GM12878 (cell line): ENCODE measurements at regions of chr1 and their contacts with region 1.

Region 1: GRCh38 chr1:199084293-199084692 is 445.5 kb downstream of the PTPRC start:
- DNase-seq: no peak
- ATAC-seq: no peak
- H3K4me3 ChIP-seq: no peak overlapping the region
- H3K27ac ChIP-seq: no peak overlapping the region
- H3K4me1 ChIP-seq: peaks cover 13% of the 10 kb centered on the region
- H3K27me3 ChIP-seq: no peaks in the 10 kb centered on the region
- CTCF ChIP-seq: no peak
- EP300 ChIP-seq: no peak
- POLR2A ChIP-seq: no peak
- RAD21 ChIP-seq: no peak

Region 2: DNA sequence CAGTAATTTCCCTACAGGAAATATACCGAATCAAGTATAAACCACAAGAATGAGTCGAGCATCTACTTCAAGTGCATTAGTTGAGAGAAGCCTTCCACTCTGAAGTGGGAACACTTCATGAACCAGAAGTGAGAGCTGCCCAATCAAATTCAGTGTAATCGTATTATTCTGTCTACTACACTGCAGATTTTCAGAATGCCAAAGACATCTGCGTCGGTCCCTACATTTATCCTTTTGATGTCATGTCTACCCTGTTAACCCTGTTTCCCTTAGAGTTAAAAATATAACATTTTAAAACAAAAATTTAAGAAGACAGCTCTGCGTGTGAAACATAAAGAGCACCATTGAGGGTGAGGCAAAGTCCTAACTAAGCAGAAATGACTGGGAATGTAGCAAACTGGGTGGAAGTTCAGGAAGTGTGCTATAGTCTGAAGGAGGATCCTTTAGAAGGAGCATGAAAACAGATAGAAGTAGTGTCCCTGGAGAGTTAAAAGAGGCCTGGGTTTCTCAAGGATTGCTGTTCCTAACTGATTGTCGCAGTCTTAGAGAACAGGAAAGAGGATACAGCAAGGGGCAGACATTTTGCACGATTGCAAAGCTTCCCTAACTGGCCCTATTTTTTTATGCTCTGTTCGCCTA is 154.2 kb before region 1 on chr1:
- CTCF ChIA-PET with region 1: interaction called, 3 read pairs
- POLR2A ChIA-PET with region 1: interaction called, 4 read pairs
- RAD21 ChIA-PET with region 1: interaction called, 26 read pairs
- SMC1A ChIA-PET with region 1: interaction called, 11 read pairs
- in situ Hi-C with region 1: no loop called
- intact Hi-C with region 1: no loop called
- DNase-seq: peak; percentile 45
- ATAC-seq: peak; percentile 69
- H3K4me3 ChIP-seq: peak overlapping the region; percentile 59
- H3K27ac ChIP-seq: peak overlapping the region; percentile 76
- H3K4me1 ChIP-seq: peaks cover 2% of the 10 kb centered on the region; the same call in 1 of the 2 replicates
- H3K27me3 ChIP-seq: no peaks in the 10 kb centered on the region
- CTCF ChIP-seq: no peak
- EP300 ChIP-seq: no peak
- POLR2A ChIP-seq: no peak
- RAD21 ChIP-seq: no peak

Region 3: GRCh38 chr1:199009447-199009846 is 74.8 kb before region 1 on chr1:
- CTCF ChIA-PET with region 1: no interaction called
- POLR2A ChIA-PET with region 1: no interaction called
- RAD21 ChIA-PET with region 1: interaction called, 12 read pairs
- SMC1A ChIA-PET with region 1: interaction called, 4 read pairs
- in situ Hi-C with region 1: no loop called
- intact Hi-C with region 1: no loop called
- DNase-seq: peak; percentile 48
- ATAC-seq: peak; percentile 83
- H3K4me3 ChIP-seq: peak overlapping the region; percentile 13; the same call in 1 of the 2 replicates
- H3K27ac ChIP-seq: peak overlapping the region; percentile 8; the same call in 1 of the 2 replicates
- H3K4me1 ChIP-seq: peaks cover 11% of the 10 kb centered on the region
- H3K27me3 ChIP-seq: no peaks in the 10 kb centered on the region
- CTCF ChIP-seq: no peak
- EP300 ChIP-seq: peak; percentile 34 to 41; a peak in 1 of 4 replicates
- POLR2A ChIP-seq: no peak
- RAD21 ChIP-seq: peak; percentile 26; the same call in 1 of the 2 replicates

Region 4: GRCh38 chr1:199041173-199041914 is 42.9 kb before region 1 on chr1:
- CTCF ChIA-PET with region 1: interaction called, 5 read pairs
- POLR2A ChIA-PET with region 1: interaction called, 3 read pairs
- RAD21 ChIA-PET with region 1: interaction called, 13 read pairs
- SMC1A ChIA-PET with region 1: interaction called, 20 read pairs
- in situ Hi-C with region 1: no loop called
- intact Hi-C with region 1: no loop called
- DNase-seq: peak; percentile 94
- ATAC-seq: peak; percentile 96
- H3K4me3 ChIP-seq: no peak overlapping the region
- H3K27ac ChIP-seq: no peak overlapping the region
- H3K4me1 ChIP-seq: peaks cover 5% of the 10 kb centered on the region; the same call in 1 of the 2 replicates
- H3K27me3 ChIP-seq: no peaks in the 10 kb centered on the region
- CTCF ChIP-seq: no peak
- EP300 ChIP-seq: peak; percentile 85 to 93
- POLR2A ChIP-seq: no peak
- RAD21 ChIP-seq: no peak

Region 5: GRCh38 chr1:199067483-199067882 is 16.8 kb before region 1 on chr1:
- CTCF ChIA-PET with region 1: interaction called, 7 read pairs
- POLR2A ChIA-PET with region 1: interaction called, 4 read pairs
- RAD21 ChIA-PET with region 1: interaction called, 48 read pairs
- SMC1A ChIA-PET with region 1: interaction called, 120 read pairs
- in situ Hi-C with region 1: no loop called
- intact Hi-C with region 1: no loop called
- DNase-seq: no peak
- ATAC-seq: peak; percentile 90
- H3K4me3 ChIP-seq: 0 out of 2 replicates have a peak overlapping the region, but pooled peaks have one; percentile 11
- H3K27ac ChIP-seq: peak overlapping the region; percentile 61; the same call in 1 of the 2 replicates
- H3K4me1 ChIP-seq: peaks cover 7% of the 10 kb centered on the region; the same call in 1 of the 2 replicates
- H3K27me3 ChIP-seq: no peaks in the 10 kb centered on the region
- CTCF ChIP-seq: no peak
- EP300 ChIP-seq: peak in 1 of 2 experiments; percentile 60; a peak in 1 of 4 replicates
- POLR2A ChIP-seq: no peak
- RAD21 ChIP-seq: no peak

Region 6: GRCh38 chr1:199073166-199073565 is 11.1 kb before region 1 on chr1:
- CTCF ChIA-PET with region 1: interaction called, 8 read pairs
- POLR2A ChIA-PET with region 1: interaction called, 4 read pairs
- RAD21 ChIA-PET with region 1: interaction called, 48 read pairs
- SMC1A ChIA-PET with region 1: interaction called, 120 read pairs
- in situ Hi-C with region 1: no loop called
- intact Hi-C with region 1: no loop called
- DNase-seq: no peak
- ATAC-seq: no peak
- H3K4me3 ChIP-seq: no peak overlapping the region
- H3K27ac ChIP-seq: no peak overlapping the region
- H3K4me1 ChIP-seq: peaks cover under 1% of the 10 kb centered on the region; the same call in 1 of the 2 replicates
- H3K27me3 ChIP-seq: no peaks in the 10 kb centered on the region
- CTCF ChIP-seq: no peak
- EP300 ChIP-seq: no peak
- POLR2A ChIP-seq: no peak
- RAD21 ChIP-seq: no peak

Region 7: DNA sequence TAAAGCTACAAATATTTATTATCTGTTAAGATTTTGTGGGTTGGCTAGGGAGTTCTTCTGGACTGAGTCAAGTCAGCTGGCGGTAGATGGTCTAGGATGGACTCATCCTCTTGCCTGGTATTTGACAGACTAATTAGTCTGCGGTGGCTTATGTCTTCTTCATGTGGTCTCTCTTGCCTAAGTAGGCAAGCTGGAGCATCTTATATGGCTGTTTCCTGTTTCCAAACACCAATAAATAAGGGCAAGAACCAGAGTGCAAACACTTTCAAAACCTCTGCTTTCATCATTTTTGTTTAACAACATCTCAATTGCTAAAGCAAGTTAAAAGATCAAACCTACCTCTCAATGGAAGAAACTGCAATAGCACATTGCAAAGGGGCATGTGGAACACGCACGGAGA is 39.3 kb after region 1 on chr1:
- CTCF ChIA-PET with region 1: no interaction called
- POLR2A ChIA-PET with region 1: no interaction called
- RAD21 ChIA-PET with region 1: no interaction called
- SMC1A ChIA-PET with region 1: no interaction called
- in situ Hi-C with region 1: no loop called
- intact Hi-C with region 1: no loop called
- DNase-seq: no peak
- ATAC-seq: no peak
- H3K4me3 ChIP-seq: no peak overlapping the region
- H3K27ac ChIP-seq: no peak overlapping the region
- H3K4me1 ChIP-seq: no peaks in the 10 kb centered on the region
- H3K27me3 ChIP-seq: no peaks in the 10 kb centered on the region
- CTCF ChIP-seq: no peak
- EP300 ChIP-seq: no peak
- POLR2A ChIP-seq: no peak
- RAD21 ChIP-seq: no peak

Region 8: GRCh38 chr1:199151634-199152425 is 67.5 kb after region 1 on chr1:
- CTCF ChIA-PET with region 1: no interaction called
- POLR2A ChIA-PET with region 1: interaction called, 3 read pairs
- RAD21 ChIA-PET with region 1: interaction called, 7 read pairs
- SMC1A ChIA-PET with region 1: interaction called, 7 read pairs
- in situ Hi-C with region 1: no loop called
- intact Hi-C with region 1: loop called (anchors 5 kb)
- DNase-seq: no peak
- ATAC-seq: peak; percentile 85
- H3K4me3 ChIP-seq: no peak overlapping the region; the same call in 1 of the 2 replicates
- H3K27ac ChIP-seq: peak overlapping the region; percentile 13; the same call in 1 of the 2 replicates
- H3K4me1 ChIP-seq: peaks cover 12% of the 10 kb centered on the region; the same call in 1 of the 2 replicates
- H3K27me3 ChIP-seq: no peaks in the 10 kb centered on the region
- CTCF ChIP-seq: no peak
- EP300 ChIP-seq: peak; percentile 78 to 82; a peak in 3 of 4 replicates
- POLR2A ChIP-seq: no peak
- RAD21 ChIP-seq: no peak